PC-9 (cell line): ENCODE measurements at regions of chr13 and their contacts with region 1.

Region 1: GRCh38 chr13:41652727-41653361 is 195.5 kb downstream of the RGCC start:
- DNase-seq: peak; percentile 12 to 41
- H3K4me3 ChIP-seq: no peak overlapping the region
- H3K27ac ChIP-seq: no peak overlapping the region
- H3K4me1 ChIP-seq: peaks cover 21% of the 10 kb centered on the region
- H3K27me3 ChIP-seq: no peaks in the 10 kb centered on the region
- CTCF ChIP-seq: peak; percentile 77

Region 2: DNA sequence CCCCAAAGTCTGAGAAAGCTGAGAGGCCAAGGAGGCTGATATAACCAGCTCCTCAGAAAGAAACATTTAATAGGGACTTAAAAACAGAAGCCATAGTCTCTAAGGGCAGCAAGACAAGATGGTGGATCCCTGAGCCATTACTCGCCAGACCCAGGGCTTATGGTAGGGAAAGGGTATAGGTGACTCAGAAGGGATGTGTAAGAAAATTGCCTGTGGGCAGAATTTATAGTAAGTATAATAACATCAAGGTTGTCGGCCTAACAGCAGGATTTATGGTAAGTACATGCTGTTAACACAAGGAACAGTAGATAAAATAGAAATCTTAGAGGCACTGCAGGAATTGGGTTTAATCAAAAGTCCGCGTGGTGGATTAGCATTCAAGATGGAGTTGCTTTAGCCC is 535.0 kb before region 1 on chr13:
- CTCF ChIA-PET with region 1: no interaction called
- POLR2A ChIA-PET with region 1: interaction called, 11 read pairs
- intact Hi-C with region 1: no loop called
- DNase-seq: no peak
- H3K4me3 ChIP-seq: no peak overlapping the region
- H3K27ac ChIP-seq: no peak overlapping the region
- H3K4me1 ChIP-seq: no peaks in the 10 kb centered on the region
- H3K27me3 ChIP-seq: no peaks in the 10 kb centered on the region
- CTCF ChIP-seq: no peak

Region 3: GRCh38 chr13:41411522-41411921 is 241.3 kb before region 1 on chr13:
- CTCF ChIA-PET with region 1: interaction called, 7 read pairs
- POLR2A ChIA-PET with region 1: no interaction called
- intact Hi-C with region 1: loop called (anchors 1 kb)
- DNase-seq: peak in 1 of 2 experiments; percentile 25
- H3K4me3 ChIP-seq: no peak overlapping the region
- H3K27ac ChIP-seq: no peak overlapping the region
- H3K4me1 ChIP-seq: no peaks in the 10 kb centered on the region
- H3K27me3 ChIP-seq: no peaks in the 10 kb centered on the region
- CTCF ChIP-seq: peak; percentile 41; the same call in 1 of the 2 replicates

Region 4: DNA sequence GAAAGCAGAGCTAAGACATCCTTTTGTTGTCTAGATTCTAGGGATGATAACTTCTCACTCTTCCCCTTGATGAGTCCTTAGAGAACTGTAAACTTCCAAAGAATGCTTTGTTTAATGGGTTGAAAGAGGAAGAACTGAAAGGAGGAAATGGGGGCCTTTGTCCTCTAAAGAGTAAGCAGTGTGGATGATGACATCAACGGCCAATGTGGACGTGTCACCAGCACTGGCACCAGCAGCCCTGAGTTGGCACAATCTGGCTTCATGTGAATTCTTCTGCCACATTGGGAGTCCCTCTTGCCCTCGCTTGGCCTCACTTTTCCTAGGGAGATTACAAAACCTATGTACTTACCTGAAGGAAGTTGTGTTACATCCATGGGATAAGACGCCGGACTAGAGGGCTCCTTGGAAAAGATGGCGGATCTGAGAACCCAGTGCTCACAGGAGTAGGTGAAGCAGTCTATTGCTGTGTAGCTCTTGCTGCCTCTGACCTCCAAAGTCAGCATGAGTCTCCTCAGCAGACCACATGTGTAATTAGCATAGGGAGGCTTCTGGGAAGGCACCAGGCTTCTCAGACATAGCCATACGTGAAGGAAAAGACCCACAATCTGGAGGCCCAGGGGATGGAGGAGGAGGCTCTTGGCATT is 132.7 kb before region 1 on chr13:
- CTCF ChIA-PET with region 1: no interaction called
- POLR2A ChIA-PET with region 1: interaction called, 12 read pairs
- intact Hi-C with region 1: no loop called
- DNase-seq: no peak
- H3K4me3 ChIP-seq: no peak overlapping the region
- H3K27ac ChIP-seq: no peak overlapping the region
- H3K4me1 ChIP-seq: no peaks in the 10 kb centered on the region
- H3K27me3 ChIP-seq: no peaks in the 10 kb centered on the region
- CTCF ChIP-seq: no peak

Region 5: DNA sequence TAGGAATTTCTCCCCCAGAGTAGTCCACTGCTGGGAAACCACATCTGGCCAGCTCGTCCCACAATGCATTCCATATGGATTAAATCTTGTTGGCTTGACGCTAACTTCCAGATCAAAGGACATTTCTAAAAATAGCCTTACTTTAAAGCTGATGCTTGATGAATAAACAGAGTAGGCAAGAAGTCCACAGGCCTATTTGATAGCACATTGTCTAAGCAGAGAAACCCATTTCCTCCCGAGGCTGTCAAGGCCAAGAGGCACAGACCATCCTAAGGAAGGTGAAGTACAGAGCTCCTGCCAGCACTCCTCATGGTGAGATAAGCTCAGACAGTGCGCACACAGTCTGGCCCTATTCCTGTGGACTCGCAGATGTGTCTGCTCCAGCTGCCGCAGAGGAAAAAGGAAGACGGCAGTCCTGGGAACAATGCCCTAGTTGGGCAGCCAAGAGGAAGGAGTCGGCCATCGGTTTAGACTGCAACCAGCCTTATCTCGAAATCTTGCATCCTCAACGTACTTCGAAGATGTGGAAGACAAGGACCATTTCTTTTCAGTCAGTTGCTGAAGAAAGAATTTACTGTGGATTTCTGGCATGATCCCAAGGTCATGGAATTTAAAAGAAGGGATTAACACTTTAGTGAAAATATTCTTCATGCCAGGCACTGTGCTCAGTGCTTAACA is 38.7 kb before region 1 on chr13:
- CTCF ChIA-PET with region 1: no interaction called
- POLR2A ChIA-PET with region 1: no interaction called
- intact Hi-C with region 1: loop called (anchors 1 kb)
- DNase-seq: peak in 1 of 2 experiments; percentile 16
- H3K4me3 ChIP-seq: no peak overlapping the region
- H3K27ac ChIP-seq: peak overlapping the region; percentile 45
- H3K4me1 ChIP-seq: peaks cover 47% of the 10 kb centered on the region
- H3K27me3 ChIP-seq: no peaks in the 10 kb centered on the region
- CTCF ChIP-seq: no peak

Region 6: GRCh38 chr13:41780715-41781706 is 128.2 kb after region 1 on chr13:
- CTCF ChIA-PET with region 1: no interaction called
- POLR2A ChIA-PET with region 1: no interaction called
- intact Hi-C with region 1: no loop called
- DNase-seq: peak; percentile 29 to 74
- H3K4me3 ChIP-seq: peak overlapping the region; percentile 20; the same call in 1 of the 2 replicates
- H3K27ac ChIP-seq: peak overlapping the region; percentile 72
- H3K4me1 ChIP-seq: peaks cover 19% of the 10 kb centered on the region
- H3K27me3 ChIP-seq: no peaks in the 10 kb centered on the region
- CTCF ChIP-seq: no peak